ENCODE measurements at regions of chr12 and their contacts with region 1.

Region 1: GRCh38 chr12:100200463-100201181 is at the start of gene ACTR6:
- DNase-seq: peak; percentile 97 to 99
- ATAC-seq: peak; percentile 97
- H3K4me3 ChIP-seq: peak within 1 kb of the TSS; percentile 97 to 99
- H3K27ac ChIP-seq: peak within 1 kb of the TSS in 1 of 2 donors; percentile 52
- H3K4me1 ChIP-seq: no peaks in the 10 kb centered on the region
- H3K27me3 ChIP-seq: no peaks in the 10 kb centered on the region
- total RNA-seq, gene ACTR6: 21.4 to 23.9 TPM

Region 2: DNA sequence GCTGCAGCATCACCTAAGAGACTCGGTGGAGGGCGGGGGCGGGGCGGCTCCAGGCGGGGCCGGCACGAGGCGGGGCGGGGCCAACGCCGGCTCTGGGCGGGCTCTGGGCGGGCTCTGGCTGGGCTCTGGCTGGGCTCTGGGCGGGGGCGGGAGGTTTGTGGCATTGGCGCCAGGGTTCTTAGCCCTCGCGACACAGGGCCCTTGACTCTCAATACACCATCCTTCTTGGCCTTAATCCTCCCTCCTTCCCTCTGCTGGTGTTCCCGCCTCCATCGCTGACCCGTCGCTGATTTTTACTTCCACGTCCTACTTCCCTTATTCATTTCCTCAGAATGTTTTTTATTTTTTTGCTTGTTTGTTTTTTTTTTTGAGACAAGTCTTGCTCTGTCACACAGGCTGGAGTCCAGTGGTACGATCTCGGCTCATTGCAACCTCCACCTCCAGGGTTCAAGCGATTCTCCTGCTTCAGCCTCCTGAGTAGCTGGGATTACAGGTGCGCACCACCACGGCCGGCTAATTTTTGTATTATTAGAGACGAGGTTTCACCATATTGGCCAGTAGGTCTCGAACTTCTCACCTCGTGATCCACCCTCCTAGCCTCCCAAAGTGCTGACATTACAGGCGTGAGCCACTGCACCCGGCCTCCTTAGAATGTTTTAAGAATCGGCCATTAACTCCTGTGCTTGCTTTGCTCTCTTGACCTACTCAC is 57.6 kb before region 1 on chr12 and contains the start of gene BLTP3B:
- intact Hi-C with region 1: loop called (anchors 1 to 5 kb)
- DNase-seq: peak; percentile 94 to 98
- ATAC-seq: peak; percentile 98
- H3K4me3 ChIP-seq: peak within 1 kb of the TSS; percentile 92 to 93
- H3K27ac ChIP-seq: peak within 1 kb of the TSS; percentile 91 to 99
- H3K4me1 ChIP-seq: peaks cover 4 to 12% of the 10 kb centered on the region in 2 donors
- H3K27me3 ChIP-seq: no peaks in the 10 kb centered on the region
- total RNA-seq, gene BLTP3B: 40.8 to 57.2 TPM

Region 3: DNA sequence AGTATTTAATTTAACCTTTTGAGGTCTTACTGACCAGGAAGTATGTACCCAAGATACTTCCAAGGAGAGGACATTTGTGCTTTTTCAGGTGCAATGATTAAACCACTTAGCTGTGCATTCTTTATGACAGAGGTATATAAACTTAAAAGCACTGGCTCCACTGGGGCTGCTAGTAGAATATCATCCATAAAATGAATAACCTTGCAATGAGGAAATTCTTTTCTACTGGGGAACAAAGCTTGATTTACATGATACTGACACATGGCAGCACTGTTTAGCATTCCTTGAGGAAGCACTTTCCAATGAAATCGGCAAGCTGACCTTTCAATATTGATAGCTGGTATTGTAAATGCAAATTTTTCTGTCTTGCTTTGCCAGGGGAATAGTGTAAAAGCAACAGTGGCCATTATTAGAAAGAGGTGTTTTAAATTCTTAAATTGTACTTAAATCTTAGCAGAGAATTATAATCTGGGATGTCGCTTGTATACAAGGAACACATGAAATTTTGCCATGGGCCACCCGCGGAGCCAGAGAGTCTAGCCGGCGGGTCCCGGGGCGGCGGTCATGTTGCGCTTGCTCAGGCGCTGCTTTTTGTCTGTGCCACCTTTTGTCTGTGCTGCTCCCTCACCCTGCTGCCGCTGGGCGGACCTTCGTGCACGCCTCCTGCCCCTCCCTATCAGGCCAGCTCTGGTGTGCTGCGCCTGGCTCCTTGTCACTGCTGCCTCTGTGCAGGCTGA is 37.0 kb before region 1 on chr12:
- intact Hi-C with region 1: loop called in 1 of 2 experiments (anchors 5 kb)
- DNase-seq: peak; percentile 84 to 90
- ATAC-seq: peak; percentile 94
- H3K4me3 ChIP-seq: no peak overlapping the region
- H3K27ac ChIP-seq: no peak overlapping the region
- H3K4me1 ChIP-seq: no peaks in the 10 kb centered on the region
- H3K27me3 ChIP-seq: no peaks in the 10 kb centered on the region

Region 4: DNA sequence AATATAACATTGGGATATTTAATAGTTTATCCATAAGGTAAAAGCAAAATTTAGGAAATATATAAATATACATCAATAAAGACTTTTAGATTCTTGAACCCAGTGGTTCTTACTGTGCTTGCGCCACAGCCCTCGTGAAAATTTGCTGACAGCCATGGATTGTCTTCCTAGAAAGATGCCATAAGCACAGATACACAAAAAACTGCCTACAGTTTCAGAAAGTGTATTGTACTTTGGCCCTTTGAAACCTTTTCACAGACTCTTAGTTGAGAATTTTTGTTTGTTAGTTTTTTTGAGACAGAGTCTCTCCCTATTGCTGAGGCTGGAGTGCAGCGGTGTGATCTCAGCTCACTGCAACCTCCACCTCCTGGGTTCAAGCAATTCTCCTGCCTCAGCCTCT is 38.2 kb after region 1 on chr12:
- intact Hi-C with region 1: no loop called
- DNase-seq: no peak
- ATAC-seq: no peak
- H3K4me3 ChIP-seq: no peak overlapping the region
- H3K27ac ChIP-seq: no peak overlapping the region
- H3K4me1 ChIP-seq: no peaks in the 10 kb centered on the region
- H3K27me3 ChIP-seq: no peaks in the 10 kb centered on the region